Transverse colon (tissue), 4 donors: ENCODE measurements at regions of chr12 and their contacts with region 1.

Region 1: DNA sequence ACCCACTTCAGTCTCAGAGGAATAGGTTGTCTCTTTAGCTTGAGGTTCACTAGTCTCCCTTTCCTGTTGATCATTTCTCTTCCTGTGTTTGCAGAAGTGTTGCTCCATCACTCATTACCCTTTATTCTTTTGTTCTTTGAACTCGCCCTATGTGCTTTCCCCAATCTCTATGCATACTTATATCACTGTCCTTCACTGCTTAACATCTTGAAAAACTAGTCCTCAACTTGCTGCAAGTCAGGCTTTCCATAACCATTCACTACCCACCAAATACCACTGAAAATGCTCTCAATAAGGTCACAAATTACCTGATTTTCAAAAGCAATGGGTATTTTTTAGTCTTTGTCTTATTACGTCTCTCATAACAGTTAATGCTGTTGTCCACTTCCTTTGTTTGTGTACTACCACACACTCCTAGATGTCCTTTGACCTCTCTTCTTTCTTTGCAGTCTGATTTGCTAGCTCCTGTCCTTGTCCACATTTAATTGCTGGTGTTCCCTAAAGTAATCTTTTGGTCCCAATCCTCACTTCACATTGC is 80.8 kb downstream of the RIC8B start:
- DNase-seq: no peak
- H3K4me3 ChIP-seq: no peak overlapping the region
- H3K27ac ChIP-seq: no peak overlapping the region
- H3K4me1 ChIP-seq: peaks cover 0 to 16% (median 0%) of the 10 kb centered on the region in 4 donors
- H3K27me3 ChIP-seq: no peaks in the 10 kb centered on the region
- CTCF ChIP-seq: no peak
- EP300 ChIP-seq: no peak
- POLR2A ChIP-seq: no peak

Region 2: DNA sequence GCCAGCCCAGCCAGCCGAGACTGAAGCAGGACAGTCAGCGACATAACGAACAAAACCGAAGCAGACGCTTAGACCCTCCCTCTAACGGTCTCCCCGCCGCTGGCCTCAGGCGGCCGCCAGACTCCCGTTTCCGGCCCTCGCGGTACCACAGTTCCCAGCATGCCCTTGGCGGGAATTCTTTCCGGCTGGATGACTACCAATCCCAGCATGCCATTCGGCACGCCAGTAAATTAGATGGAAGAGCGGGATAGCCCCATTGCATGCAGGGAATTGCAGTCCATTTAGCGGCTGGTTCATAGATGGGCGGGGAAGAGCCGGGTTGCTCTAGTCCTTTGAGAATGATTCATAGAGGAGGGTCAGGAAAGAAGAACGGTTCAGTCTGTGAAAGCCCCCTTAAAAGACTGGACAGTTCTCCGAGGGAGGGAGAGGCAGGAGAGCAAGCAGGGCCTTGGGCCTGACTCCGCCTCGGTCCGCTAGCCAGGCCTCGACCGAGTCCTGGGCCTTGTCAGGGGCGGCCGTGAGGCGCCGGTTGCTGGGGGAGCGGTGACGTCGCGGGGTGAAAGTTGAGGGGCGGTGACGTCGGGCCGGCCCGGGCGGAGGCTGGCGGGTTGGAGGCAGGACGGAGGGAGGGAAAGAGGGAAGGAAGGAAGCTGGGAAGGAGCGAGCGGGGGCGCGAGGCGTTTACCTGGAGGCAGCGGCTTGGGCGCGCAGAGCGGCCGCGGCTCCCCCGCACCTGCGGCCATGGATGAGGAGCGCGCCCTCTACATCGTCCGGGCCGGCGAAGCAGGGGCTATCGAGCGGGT is 81.1 kb before region 1 on chr12 and contains the start of gene RIC8B:
- in situ Hi-C with region 1: no loop called
- intact Hi-C with region 1: no loop called
- DNase-seq: peak; percentile 96
- H3K4me3 ChIP-seq: peak within 1 kb of the TSS; percentile 79 to 96 (median 94)
- H3K27ac ChIP-seq: peak within 1 kb of the TSS; percentile 90 to 93 (median 93)
- H3K4me1 ChIP-seq: peaks cover 6 to 33% (median 10%) of the 10 kb centered on the region in 4 donors
- H3K27me3 ChIP-seq: no peaks in the 10 kb centered on the region
- CTCF ChIP-seq: no peak
- EP300 ChIP-seq: no peak
- POLR2A ChIP-seq: peak; percentile 76
- total RNA-seq, gene RIC8B: 10.5 to 19.5 (median 16.6) TPM

Region 3: GRCh38 chr12:107607464-107608392 is 752.4 kb after region 1 on chr12:
- in situ Hi-C with region 1: no loop called
- intact Hi-C with region 1: loop called (anchors 10 kb)
- DNase-seq: peak; percentile 81
- H3K4me3 ChIP-seq: no peak overlapping the region
- H3K27ac ChIP-seq: no peak overlapping the region
- H3K4me1 ChIP-seq: no peaks in the 10 kb centered on the region
- H3K27me3 ChIP-seq: no peaks in the 10 kb centered on the region
- CTCF ChIP-seq: peak; percentile 80 to 93 (median 83)
- EP300 ChIP-seq: no peak
- POLR2A ChIP-seq: no peak